H1 (cell line): ENCODE measurements at regions of chr6 and their contacts with region 1.

Region 1: DNA sequence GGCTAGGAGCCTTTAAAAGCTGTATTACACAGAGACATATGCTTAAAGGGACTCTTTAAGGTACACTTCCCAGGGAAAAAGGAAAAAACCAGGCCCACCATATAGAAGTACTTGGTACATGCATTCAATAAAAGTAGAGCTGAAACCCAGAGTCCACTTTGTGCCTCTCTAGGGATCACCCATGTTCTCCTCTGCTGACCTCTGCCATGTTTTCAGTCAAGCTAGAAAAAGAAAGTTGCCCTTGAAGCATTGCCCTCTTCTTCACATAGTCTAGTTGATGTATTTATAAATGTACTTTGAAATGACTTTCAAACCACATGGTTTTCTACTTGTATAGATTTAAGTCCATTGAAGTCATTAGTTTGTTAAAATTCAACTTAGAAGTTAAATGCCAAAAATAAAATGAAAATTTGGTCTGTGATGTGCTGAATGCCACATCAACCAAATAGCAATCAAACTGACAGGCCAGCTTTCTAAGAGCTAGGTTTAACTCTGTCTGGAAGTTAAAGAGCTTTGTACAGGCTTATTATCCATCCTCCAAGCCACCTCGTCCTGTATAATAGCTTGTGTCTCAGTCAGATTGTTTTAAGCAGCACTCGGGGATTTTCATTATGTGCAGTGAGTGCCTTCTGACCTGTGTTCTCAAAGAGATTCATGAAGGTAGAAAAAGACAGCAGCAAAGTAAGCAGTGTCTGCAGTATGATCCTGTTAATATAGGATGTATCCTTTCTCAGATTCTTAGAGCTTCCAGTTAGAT is 238.6 kb upstream of the PLN start:
- DNase-seq: no peak
- H3K4me3 ChIP-seq: no peak overlapping the region
- H3K27ac ChIP-seq: no peak overlapping the region
- H3K4me1 ChIP-seq: peaks cover 0 to 3% (median 0%) of the 10 kb centered on the region in 4 experiments; a peak in 2 of 7 replicates
- H3K27me3 ChIP-seq: no peaks in the 10 kb centered on the region; a peak in 1 of 7 replicates
- CTCF ChIP-seq: no peak
- EP300 ChIP-seq: no peak
- POLR2A ChIP-seq: no peak
- RAD21 ChIP-seq: no peak

Region 2: GRCh38 chr6:118320652-118321051 is 11.1 kb after region 1 on chr6:
- CTCF ChIA-PET with region 1: interaction called, 16 read pairs
- POLR2A ChIA-PET with region 1: interaction called, 3 read pairs
- DNase-seq: no peak
- H3K4me3 ChIP-seq: no peak overlapping the region
- H3K27ac ChIP-seq: no peak overlapping the region
- H3K4me1 ChIP-seq: peaks cover 0 to 9% (median 4%) of the 10 kb centered on the region in 4 experiments; a peak in 5 of 7 replicates
- H3K27me3 ChIP-seq: no peaks in the 10 kb centered on the region
- CTCF ChIP-seq: no peak
- EP300 ChIP-seq: no peak
- POLR2A ChIP-seq: no peak
- RAD21 ChIP-seq: no peak